ENCODE measurements at regions of chr12 and their contacts with region 1.

Region 1: GRCh38 chr12:10557766-10558165 is 52.1 kb downstream of the EIF2S3B start:
- DNase-seq: peak in 2 of 5 donors; percentile 21 to 36
- H3K4me3 ChIP-seq: no peak overlapping the region
- H3K27ac ChIP-seq: no peak overlapping the region
- H3K4me1 ChIP-seq: no peaks in the 10 kb centered on the region
- H3K27me3 ChIP-seq: no peaks in the 10 kb centered on the region
- CTCF ChIP-seq: no peak

Region 2: DNA sequence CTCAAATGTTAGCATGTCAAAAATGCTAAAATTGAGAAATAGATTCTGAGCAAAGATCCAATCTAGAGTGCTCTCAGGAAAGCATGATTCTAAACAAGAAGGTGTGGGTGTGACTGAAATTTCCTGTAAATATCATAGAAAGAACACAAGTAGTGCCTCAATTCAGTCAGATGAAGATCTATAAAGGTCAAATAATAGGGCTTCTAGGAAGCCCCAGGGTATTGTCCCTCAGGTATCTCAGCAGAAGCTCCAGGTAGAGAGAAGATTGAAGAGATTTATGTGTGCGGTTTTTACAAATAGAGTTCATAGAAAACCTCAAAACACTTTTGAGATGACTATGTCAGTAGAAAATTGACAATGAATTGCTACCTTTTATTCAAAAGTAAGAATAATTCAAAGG is 237.1 kb before region 1 on chr12:
- intact Hi-C with region 1: loop called (anchors 10 kb)
- DNase-seq: no peak
- H3K4me3 ChIP-seq: no peak overlapping the region
- H3K27ac ChIP-seq: no peak overlapping the region
- H3K4me1 ChIP-seq: no peaks in the 10 kb centered on the region
- H3K27me3 ChIP-seq: no peaks in the 10 kb centered on the region
- CTCF ChIP-seq: no peak

Measured in kidney (tissue), 22 donors.